HEK293 (cell line): ENCODE measurements at regions of chr12 and their contacts with region 1.

Region 1: GRCh38 chr12:6533923-6534694 is at the start of gene GAPDH:
- H3K4me3 ChIP-seq: peak within 1 kb of the TSS; percentile 73
- H3K27ac ChIP-seq: peak within 1 kb of the TSS; percentile 93
- H3K4me1 ChIP-seq: peaks cover 12% of the 10 kb centered on the region
- CTCF ChIP-seq: no peak

Region 2: GRCh38 chr12:6488240-6488639 is 45.9 kb before region 1 on chr12:
- CTCF ChIA-PET with region 1: interaction called, 3 read pairs
- POLR2A ChIA-PET with region 1: interaction called, 51 read pairs
- H3K4me3 ChIP-seq: no peak overlapping the region
- H3K27ac ChIP-seq: no peak overlapping the region
- H3K4me1 ChIP-seq: peaks cover 4% of the 10 kb centered on the region; the same call in 1 of the 2 replicates
- CTCF ChIP-seq: no peak

Region 3: GRCh38 chr12:6523708-6524107 is 10.4 kb before region 1 on chr12:
- CTCF ChIA-PET with region 1: interaction called, 6 read pairs
- POLR2A ChIA-PET with region 1: interaction called, 12 read pairs
- H3K4me3 ChIP-seq: no peak overlapping the region
- H3K27ac ChIP-seq: no peak overlapping the region
- H3K4me1 ChIP-seq: no peaks in the 10 kb centered on the region
- CTCF ChIP-seq: no peak

Region 4: DNA sequence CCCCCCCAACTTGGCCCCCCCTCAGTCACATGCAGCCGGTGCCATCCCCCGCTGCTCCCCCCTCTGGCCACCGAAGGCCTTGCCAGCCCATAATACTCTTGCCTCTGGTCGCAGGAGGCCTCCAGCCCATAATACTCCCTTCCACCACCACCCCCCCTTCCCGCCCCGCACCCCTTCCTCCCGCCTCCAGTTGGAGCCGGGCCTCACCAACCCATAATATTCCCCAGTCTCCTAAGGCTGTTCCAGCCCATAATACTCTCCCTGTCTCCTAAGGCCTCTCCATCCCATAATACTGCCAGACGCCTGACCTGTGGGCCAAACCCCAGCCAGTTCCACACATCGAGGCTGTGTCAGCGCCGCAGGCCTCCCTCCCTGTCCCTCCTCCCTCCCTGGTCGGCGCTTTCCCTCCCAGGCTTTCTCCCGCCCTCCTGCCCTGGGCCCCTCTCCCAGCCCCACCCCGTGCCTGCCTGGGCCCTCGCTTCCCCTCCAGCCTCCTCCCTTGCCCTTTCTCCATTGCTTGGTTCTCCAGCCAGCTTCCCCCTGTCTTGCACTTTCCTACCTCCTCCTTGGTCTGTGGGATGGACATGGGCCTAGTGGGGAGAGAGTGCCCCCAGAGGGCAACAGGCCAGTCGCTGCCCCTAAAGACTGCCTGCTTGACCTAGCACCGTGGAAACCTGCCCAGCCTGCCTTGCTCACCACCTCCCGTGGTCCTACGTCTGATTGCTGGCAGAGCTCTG is 79.8 kb after region 1 on chr12:
- CTCF ChIA-PET with region 1: no interaction called
- POLR2A ChIA-PET with region 1: interaction called, 16 read pairs
- H3K4me3 ChIP-seq: no peak overlapping the region
- H3K27ac ChIP-seq: peak overlapping the region; percentile 79
- H3K4me1 ChIP-seq: peaks cover 14% of the 10 kb centered on the region
- CTCF ChIP-seq: peak; percentile 87

Region 5: GRCh38 chr12:6764011-6764828 is 230.1 kb after region 1 on chr12:
- CTCF ChIA-PET with region 1: no interaction called
- POLR2A ChIA-PET with region 1: interaction called, 10 read pairs
- H3K4me3 ChIP-seq: no peak overlapping the region; the same call in 1 of the 2 replicates
- H3K27ac ChIP-seq: peak overlapping the region; percentile 92
- H3K4me1 ChIP-seq: peaks cover 30% of the 10 kb centered on the region
- CTCF ChIP-seq: no peak